Colonic mucosa (tissue), 4 donors: ENCODE measurements at regions of chr1 and their contacts with region 1.

Region 1: GRCh38 chr1:234065794-234066447 is 161.4 kb downstream of the SLC35F3 start:
- DNase-seq: peak; percentile 77
- H3K4me3 ChIP-seq: no peak overlapping the region
- H3K27ac ChIP-seq: no peak overlapping the region
- H3K4me1 ChIP-seq: no peaks in the 10 kb centered on the region
- H3K27me3 ChIP-seq: no peaks in the 10 kb centered on the region
- CTCF ChIP-seq: peak; percentile 73

Region 2: GRCh38 chr1:233304489-233305102 is 761.3 kb before region 1 on chr1:
- intact Hi-C with region 1: loop called (anchors 10 kb)
- DNase-seq: no peak
- H3K4me3 ChIP-seq: no peak overlapping the region
- H3K27ac ChIP-seq: no peak overlapping the region
- H3K4me1 ChIP-seq: no peaks in the 10 kb centered on the region
- H3K27me3 ChIP-seq: no peaks in the 10 kb centered on the region
- CTCF ChIP-seq: peak; percentile 85

Region 3: DNA sequence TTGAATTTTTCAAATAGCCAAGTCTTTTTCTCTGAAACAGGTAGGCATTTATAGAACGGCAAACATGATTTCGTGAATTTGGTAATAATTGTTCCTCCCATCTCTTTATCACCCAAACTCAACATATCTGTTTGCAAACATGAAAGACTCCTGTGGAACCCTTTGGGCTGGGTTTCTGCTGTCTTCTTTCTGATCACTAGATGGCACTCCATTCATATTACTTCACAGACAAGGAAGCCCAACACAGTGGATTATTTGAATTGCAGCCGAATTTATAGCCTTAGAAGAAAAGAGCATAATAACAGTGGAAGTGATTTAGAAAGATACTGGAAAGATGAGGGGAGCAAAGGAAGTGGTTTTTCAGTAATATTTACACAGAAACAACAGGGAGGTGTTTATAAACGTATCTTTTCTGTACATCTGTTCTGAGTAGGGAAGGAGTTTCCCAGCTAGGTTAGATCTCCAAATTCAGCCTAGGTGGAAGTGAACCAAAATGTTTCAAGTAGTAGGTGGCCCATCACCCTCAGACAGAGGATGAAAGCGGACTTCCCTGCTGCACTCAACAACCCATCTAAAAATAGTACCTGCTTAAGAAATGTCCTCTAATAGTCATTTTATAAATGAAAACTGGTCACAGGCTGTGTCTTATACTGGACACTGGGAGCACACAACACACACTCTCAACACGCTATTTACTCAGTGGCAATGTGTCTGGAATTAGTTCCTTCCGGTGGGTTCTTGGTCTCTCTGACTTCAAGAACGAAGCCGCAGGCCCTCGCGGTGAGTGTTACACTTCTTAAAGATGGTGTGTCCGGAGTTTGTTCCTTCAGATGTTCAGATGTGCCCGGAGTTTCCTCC is 670.8 kb before region 1 on chr1:
- intact Hi-C with region 1: loop called (anchors 5 kb)
- DNase-seq: peak; percentile 32
- H3K4me3 ChIP-seq: no peak overlapping the region
- H3K27ac ChIP-seq: no peak overlapping the region
- H3K4me1 ChIP-seq: no peaks in the 10 kb centered on the region
- H3K27me3 ChIP-seq: no peaks in the 10 kb centered on the region
- CTCF ChIP-seq: peak; percentile 51

Region 4: GRCh38 chr1:233440951-233441401 is 624.9 kb before region 1 on chr1:
- intact Hi-C with region 1: loop called (anchors 10 kb)
- DNase-seq: peak; percentile 25
- H3K4me3 ChIP-seq: no peak overlapping the region
- H3K27ac ChIP-seq: no peak overlapping the region
- H3K4me1 ChIP-seq: no peaks in the 10 kb centered on the region
- H3K27me3 ChIP-seq: no peaks in the 10 kb centered on the region
- CTCF ChIP-seq: peak; percentile 51